Esophagus squamous epithelium (tissue), 5 donors: ENCODE measurements at regions of chr19 and their contacts with region 1.

Region 1: GRCh38 chr19:50368649-50369570 is 3.5 kb upstream of the NAPSA start:
- DNase-seq: no peak
- H3K4me3 ChIP-seq: peak overlapping the region; percentile 49 to 73 (median 64)
- H3K27ac ChIP-seq: peak overlapping the region; percentile 74 to 82 (median 79)
- H3K4me1 ChIP-seq: peaks cover 0 to 24% (median 0%) of the 10 kb centered on the region in 3 donors
- H3K27me3 ChIP-seq: no peaks in the 10 kb centered on the region
- CTCF ChIP-seq: peak; percentile 84 to 90 (median 90)
- POLR2A ChIP-seq: no peak

Region 2: DNA sequence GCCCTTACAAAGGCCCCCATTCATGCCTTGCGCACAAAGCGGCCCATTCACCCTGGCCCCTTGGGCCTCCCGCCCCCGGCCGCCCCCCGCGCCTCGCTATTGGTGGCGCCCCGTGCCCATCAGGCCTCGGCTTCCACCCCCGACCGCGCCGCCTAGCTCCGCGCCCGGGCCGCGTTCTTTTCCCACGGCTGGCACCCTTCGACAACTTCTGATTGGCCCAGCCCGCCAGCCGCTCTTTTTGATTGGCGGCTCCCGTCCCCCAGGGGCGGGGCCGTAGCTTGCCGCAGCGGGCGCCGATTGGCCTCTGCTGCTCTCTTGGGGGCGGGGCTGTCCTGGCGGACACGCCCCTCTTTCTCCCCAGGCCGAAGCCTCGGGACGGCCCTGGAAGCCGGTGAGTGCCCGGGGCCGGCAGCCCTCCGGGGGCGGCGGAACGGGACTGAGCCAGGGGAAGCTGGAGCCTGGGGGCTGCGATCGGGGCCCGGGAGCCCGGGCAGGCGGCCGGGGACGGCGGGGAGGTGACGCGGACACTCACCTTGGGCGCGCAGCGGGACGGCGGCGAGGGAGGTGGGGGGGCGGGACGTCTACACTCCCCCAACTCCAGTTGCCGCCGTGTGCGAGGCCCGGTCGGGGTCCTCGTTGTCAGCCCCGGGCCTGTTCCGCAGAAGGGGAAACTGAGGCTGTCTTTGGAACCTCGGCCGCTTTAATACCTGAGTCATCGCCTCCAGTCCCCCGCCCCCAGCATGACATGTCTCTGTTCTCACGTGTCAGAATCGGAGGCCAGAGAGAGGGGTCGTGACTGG is 165.4 kb before region 1 on chr19 and contains the start of gene MYH14:
- intact Hi-C with region 1: no loop called
- DNase-seq: no peak
- H3K4me3 ChIP-seq: peak within 1 kb of the TSS; percentile 43 to 68 (median 56)
- H3K27ac ChIP-seq: peak within 1 kb of the TSS; percentile 62 to 87 (median 74)
- H3K4me1 ChIP-seq: peaks cover 5 to 51% (median 15%) of the 10 kb centered on the region in 3 donors
- H3K27me3 ChIP-seq: peaks cover 0 to 76% (median 14%) of the 10 kb centered on the region in 4 donors
- CTCF ChIP-seq: no peak
- POLR2A ChIP-seq: peak in 1 of 4 donors; percentile 73
- total RNA-seq, gene MYH14: 31.1 to 141 (median 39.0) TPM

Region 3: DNA sequence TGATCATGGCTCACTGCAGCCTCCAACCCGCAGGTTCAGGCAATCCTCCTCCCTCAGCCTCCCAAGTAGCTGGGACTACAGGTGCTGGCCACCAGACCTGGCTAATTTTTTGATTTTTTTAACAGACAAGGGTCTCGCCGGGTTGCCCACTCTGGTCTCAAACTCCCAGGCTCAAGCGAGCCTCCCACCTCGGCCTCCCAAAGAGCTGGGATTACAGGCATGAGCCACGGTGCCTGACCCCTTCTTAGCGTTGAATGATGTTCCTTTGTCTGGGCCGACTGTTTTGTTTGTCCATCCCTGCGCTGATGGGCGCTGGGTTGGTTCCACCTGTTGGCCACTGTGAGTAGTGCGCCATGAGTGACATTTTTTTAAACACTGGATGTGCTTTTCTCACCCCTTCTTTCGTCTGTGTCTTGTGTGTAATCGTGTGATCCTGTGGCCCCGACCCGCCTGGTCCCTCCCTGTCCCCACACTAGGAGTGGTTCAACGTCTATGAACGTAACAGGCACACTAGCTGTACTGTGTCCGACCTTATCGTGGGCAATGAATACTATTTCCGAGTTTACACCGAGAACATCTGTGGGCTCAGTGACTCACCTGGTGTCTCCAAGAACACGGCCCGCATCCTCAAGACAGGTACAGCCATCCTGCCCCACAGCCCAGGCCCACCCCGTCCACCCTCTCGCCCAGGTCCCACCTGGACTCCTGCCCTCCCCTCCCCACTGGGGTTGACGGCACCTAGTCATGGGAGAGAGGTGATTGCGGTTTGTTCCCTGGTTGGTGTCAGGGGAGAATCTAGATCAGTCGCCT is 92.4 kb after region 1 on chr19:
- intact Hi-C with region 1: loop called (anchors 5 kb)
- DNase-seq: no peak
- H3K4me3 ChIP-seq: no peak overlapping the region
- H3K27ac ChIP-seq: no peak overlapping the region
- H3K4me1 ChIP-seq: peaks cover 0 to under 1% (median 0%) of the 10 kb centered on the region in 3 donors
- H3K27me3 ChIP-seq: peaks cover 0 to 78% (median 5%) of the 10 kb centered on the region in 4 donors
- CTCF ChIP-seq: peak; percentile 72 to 83 (median 78)
- POLR2A ChIP-seq: no peak

Region 4: GRCh38 chr19:50537762-50538230 is 168.9 kb after region 1 on chr19:
- intact Hi-C with region 1: no loop called
- DNase-seq: no peak
- H3K4me3 ChIP-seq: no peak overlapping the region
- H3K27ac ChIP-seq: no peak overlapping the region
- H3K4me1 ChIP-seq: no peaks in the 10 kb centered on the region
- H3K27me3 ChIP-seq: peaks cover 0 to 13% (median 0%) of the 10 kb centered on the region in 4 donors
- CTCF ChIP-seq: peak; percentile 36 to 70 (median 54)
- POLR2A ChIP-seq: no peak

Region 5: GRCh38 chr19:50779504-50780457 is 410.9 kb after region 1 on chr19:
- intact Hi-C with region 1: loop called (anchors 5 kb)
- DNase-seq: no peak
- H3K4me3 ChIP-seq: no peak overlapping the region
- H3K27ac ChIP-seq: no peak overlapping the region
- H3K4me1 ChIP-seq: peaks cover 0 to 9% (median 0%) of the 10 kb centered on the region in 3 donors
- H3K27me3 ChIP-seq: peaks cover 0 to 86% (median 8%) of the 10 kb centered on the region in 4 donors
- CTCF ChIP-seq: no peak
- POLR2A ChIP-seq: no peak